Calu3 (cell line): ENCODE measurements at regions of chr16 and their contacts with region 1.

Region 1: GRCh38 chr16:46908540-46909372 is 24.6 kb downstream of the GPT2 start:
- DNase-seq: peak; percentile 72
- H3K4me3 Mint-ChIP-seq: no peak overlapping the region
- H3K27ac Mint-ChIP-seq: no peak overlapping the region
- H3K4me1 Mint-ChIP-seq: peaks cover 9% of the 10 kb centered on the region
- H3K27me3 Mint-ChIP-seq: no peaks in the 10 kb centered on the region
- CTCF ChIP-seq: peak; percentile 82

Region 2: GRCh38 chr16:46583036-46583435 is 325.7 kb before region 1 on chr16:
- CTCF ChIA-PET with region 1: no interaction called
- intact Hi-C with region 1: no loop called
- DNase-seq: no peak
- H3K4me3 Mint-ChIP-seq: no peak overlapping the region
- H3K27ac Mint-ChIP-seq: no peak overlapping the region
- H3K4me1 Mint-ChIP-seq: peaks cover 4% of the 10 kb centered on the region
- H3K27me3 Mint-ChIP-seq: no peaks in the 10 kb centered on the region
- CTCF ChIP-seq: no peak

Region 3: DNA sequence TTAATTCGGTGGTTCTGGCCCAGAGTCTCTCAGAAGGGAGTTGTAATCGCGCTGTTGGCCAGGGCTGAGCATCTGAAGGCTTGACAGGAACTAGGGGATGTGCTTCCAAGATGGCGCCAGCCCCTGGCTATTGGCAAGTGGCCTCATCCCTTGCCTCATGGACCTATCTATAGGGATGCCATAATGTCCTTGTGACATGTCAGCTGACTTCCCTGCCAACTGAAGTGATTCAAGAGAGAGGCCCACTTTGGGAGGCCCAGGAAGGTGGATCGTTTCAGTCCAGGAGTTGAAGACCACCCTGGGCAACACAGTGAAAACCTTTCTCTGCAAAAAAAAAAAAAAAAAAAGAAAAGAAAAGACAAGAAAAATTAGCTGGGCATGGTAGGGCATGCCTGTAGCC is 62.8 kb before region 1 on chr16:
- CTCF ChIA-PET with region 1: no interaction called
- intact Hi-C with region 1: no loop called
- DNase-seq: no peak
- H3K4me3 Mint-ChIP-seq: no peak overlapping the region
- H3K27ac Mint-ChIP-seq: no peak overlapping the region
- H3K4me1 Mint-ChIP-seq: peaks cover 7% of the 10 kb centered on the region
- H3K27me3 Mint-ChIP-seq: no peaks in the 10 kb centered on the region
- CTCF ChIP-seq: no peak

Region 4: DNA sequence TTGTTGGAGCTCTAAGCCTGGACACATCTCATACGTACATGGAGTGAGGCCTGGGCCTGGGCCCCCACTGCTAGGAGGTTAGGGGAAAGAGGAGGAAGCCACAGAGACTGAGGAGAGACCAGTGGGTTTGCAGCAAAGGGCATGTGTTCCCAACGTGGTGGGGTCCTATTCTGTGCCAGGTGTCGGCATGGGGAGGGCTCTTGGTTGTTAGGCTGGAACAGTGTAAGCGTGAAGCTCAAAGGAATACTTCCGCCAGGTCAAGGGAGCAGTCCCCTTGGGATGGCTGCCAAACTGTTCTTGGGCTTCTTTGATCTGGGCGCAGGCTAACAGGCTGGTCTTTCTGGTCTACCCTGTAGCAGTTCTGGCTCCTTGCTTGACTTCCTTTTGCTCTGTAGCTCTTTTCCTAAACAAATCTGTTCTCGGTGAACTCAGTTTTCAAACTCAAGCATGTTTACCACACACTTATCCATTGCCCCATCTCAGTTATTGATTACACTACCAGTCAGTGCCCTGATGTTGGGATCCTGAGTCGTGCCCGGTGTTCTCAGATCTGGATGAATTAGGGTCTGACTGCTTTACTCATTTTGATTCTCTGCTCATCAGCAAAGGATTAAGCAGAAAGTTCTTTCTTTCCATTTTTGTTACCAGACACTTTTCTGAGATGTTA is 11.8 kb after region 1 on chr16:
- CTCF ChIA-PET with region 1: interaction called, 10 read pairs
- intact Hi-C with region 1: no loop called
- DNase-seq: peak; percentile 83
- H3K4me3 Mint-ChIP-seq: peak overlapping the region; percentile 31
- H3K27ac Mint-ChIP-seq: peak overlapping the region; percentile 35
- H3K4me1 Mint-ChIP-seq: peaks cover 25% of the 10 kb centered on the region
- H3K27me3 Mint-ChIP-seq: no peaks in the 10 kb centered on the region
- CTCF ChIP-seq: no peak

Region 5: GRCh38 chr16:46982335-46982734 is 73.6 kb after region 1 on chr16:
- CTCF ChIA-PET with region 1: no interaction called
- intact Hi-C with region 1: no loop called
- DNase-seq: no peak
- H3K4me3 Mint-ChIP-seq: no peak overlapping the region
- H3K27ac Mint-ChIP-seq: no peak overlapping the region
- H3K4me1 Mint-ChIP-seq: no peaks in the 10 kb centered on the region
- H3K27me3 Mint-ChIP-seq: no peaks in the 10 kb centered on the region
- CTCF ChIP-seq: no peak

Region 6: DNA sequence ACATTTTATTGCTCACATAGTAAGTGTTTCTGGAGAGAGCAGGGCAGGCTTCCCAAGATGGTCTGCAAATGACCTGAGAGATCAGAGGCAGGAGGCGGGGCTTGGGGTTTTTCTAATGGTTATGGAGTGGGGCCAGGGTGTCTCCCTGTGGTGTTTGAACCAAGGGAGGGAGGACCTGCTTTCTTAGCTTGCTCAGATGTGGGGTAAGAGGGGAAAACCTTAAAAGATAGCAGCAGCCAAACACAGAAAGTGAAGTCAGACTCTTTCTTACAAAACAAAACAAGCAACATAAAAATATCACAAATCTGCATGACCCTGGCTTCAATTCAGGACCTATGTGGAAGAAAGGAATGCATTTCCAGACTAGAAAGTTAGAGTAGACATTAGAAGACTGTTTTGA is 87.6 kb after region 1 on chr16:
- CTCF ChIA-PET with region 1: no interaction called
- intact Hi-C with region 1: no loop called
- DNase-seq: no peak
- H3K4me3 Mint-ChIP-seq: no peak overlapping the region
- H3K27ac Mint-ChIP-seq: no peak overlapping the region
- H3K4me1 Mint-ChIP-seq: no peaks in the 10 kb centered on the region
- H3K27me3 Mint-ChIP-seq: no peaks in the 10 kb centered on the region
- CTCF ChIP-seq: no peak